GM12878 (cell line): ENCODE measurements at regions of chr1 and their contacts with region 1.

Region 1: DNA sequence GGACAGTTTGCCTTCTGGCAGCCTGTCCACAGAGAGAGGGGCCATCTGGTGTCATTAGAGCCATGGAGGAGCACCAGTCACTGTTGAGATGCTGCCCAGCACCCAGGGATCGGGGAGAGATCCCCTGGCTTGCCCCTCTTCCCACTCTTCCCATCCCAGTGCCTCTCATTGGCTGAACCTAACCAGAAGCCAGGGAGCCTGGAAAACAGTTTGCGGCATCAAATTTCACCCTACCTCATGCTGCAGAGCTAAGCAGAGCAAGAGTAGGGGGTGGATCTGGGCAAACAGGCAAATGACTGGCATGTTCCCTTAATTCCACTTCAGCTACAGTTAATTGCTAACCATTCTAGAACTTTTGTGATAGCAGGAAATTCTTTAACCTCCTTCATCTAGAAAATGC is 19.1 kb downstream of the TRAF5 start:
- DNase-seq: no peak
- ATAC-seq: no peak
- H3K4me3 ChIP-seq: no peak overlapping the region
- H3K27ac ChIP-seq: no peak overlapping the region
- H3K4me1 ChIP-seq: no peaks in the 10 kb centered on the region
- H3K27me3 ChIP-seq: no peaks in the 10 kb centered on the region
- CTCF ChIP-seq: no peak
- EP300 ChIP-seq: no peak
- POLR2A ChIP-seq: no peak
- RAD21 ChIP-seq: no peak

Region 2: GRCh38 chr1:211335522-211336157 is 10.1 kb before region 1 on chr1:
- CTCF ChIA-PET with region 1: interaction called, 14 read pairs
- POLR2A ChIA-PET with region 1: interaction called, 3 read pairs
- RAD21 ChIA-PET with region 1: interaction called, 13 read pairs
- SMC1A ChIA-PET with region 1: interaction called, 21 read pairs
- in situ Hi-C with region 1: no loop called
- intact Hi-C with region 1: no loop called
- DNase-seq: no peak
- ATAC-seq: peak; percentile 85
- H3K4me3 ChIP-seq: peak overlapping the region; percentile 59; the same call in 1 of the 2 replicates
- H3K27ac ChIP-seq: peak overlapping the region; percentile 64
- H3K4me1 ChIP-seq: peaks cover 40% of the 10 kb centered on the region
- H3K27me3 ChIP-seq: no peaks in the 10 kb centered on the region
- CTCF ChIP-seq: no peak
- EP300 ChIP-seq: no peak
- POLR2A ChIP-seq: no peak; the same call in 1 of the 2 replicates
- RAD21 ChIP-seq: no peak

Region 3: DNA sequence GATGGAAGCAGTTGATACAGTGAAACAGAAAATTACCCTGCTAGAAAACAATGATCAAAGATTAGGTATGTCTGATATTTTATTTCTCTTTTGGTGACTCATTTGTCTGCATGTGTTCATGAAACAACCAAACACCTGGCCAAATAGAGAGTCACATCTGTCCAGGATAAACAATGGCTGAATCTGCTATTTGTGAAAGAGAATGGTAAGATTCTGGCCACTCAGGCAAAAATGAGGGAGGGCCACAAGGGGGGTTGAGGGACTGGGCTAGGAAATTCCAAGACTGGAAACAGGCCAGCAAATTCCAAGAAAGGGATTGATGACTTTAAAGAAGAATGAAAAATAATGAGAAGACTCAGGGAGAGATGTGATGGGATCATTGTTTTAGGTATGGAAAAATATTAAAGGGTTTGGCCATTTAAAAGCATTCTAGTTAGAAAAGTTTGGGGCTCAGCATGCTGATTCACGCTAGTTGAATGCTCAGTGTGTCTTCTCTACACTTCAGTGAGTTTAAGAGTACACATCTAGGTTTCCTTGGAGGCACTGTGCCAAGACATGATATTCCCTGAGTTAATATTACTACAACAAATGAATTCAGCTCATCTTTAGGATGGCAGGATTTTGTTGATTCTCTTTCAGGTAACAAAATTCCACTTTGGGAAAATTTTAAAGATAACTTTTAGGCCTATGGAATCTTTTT is 25.8 kb after region 1 on chr1:
- CTCF ChIA-PET with region 1: no interaction called
- POLR2A ChIA-PET with region 1: no interaction called
- RAD21 ChIA-PET with region 1: no interaction called
- SMC1A ChIA-PET with region 1: no interaction called
- in situ Hi-C with region 1: no loop called
- intact Hi-C with region 1: no loop called
- DNase-seq: no peak
- ATAC-seq: no peak
- H3K4me3 ChIP-seq: no peak overlapping the region
- H3K27ac ChIP-seq: no peak overlapping the region
- H3K4me1 ChIP-seq: no peaks in the 10 kb centered on the region
- H3K27me3 ChIP-seq: no peaks in the 10 kb centered on the region
- CTCF ChIP-seq: no peak
- EP300 ChIP-seq: no peak
- POLR2A ChIP-seq: no peak
- RAD21 ChIP-seq: no peak